ENCODE measurements at regions of chr12 and their contacts with region 1.

Region 1: GRCh38 chr12:57390174-57390573 is 40.7 kb downstream of the R3HDM2 start:
- DNase-seq: no peak
- H3K4me3 ChIP-seq: no peak overlapping the region
- H3K27ac ChIP-seq: no peak overlapping the region
- H3K4me1 ChIP-seq: no peaks in the 10 kb centered on the region
- H3K27me3 ChIP-seq: no peaks in the 10 kb centered on the region
- CTCF ChIP-seq: no peak
- POLR2A ChIP-seq: no peak

Region 2: DNA sequence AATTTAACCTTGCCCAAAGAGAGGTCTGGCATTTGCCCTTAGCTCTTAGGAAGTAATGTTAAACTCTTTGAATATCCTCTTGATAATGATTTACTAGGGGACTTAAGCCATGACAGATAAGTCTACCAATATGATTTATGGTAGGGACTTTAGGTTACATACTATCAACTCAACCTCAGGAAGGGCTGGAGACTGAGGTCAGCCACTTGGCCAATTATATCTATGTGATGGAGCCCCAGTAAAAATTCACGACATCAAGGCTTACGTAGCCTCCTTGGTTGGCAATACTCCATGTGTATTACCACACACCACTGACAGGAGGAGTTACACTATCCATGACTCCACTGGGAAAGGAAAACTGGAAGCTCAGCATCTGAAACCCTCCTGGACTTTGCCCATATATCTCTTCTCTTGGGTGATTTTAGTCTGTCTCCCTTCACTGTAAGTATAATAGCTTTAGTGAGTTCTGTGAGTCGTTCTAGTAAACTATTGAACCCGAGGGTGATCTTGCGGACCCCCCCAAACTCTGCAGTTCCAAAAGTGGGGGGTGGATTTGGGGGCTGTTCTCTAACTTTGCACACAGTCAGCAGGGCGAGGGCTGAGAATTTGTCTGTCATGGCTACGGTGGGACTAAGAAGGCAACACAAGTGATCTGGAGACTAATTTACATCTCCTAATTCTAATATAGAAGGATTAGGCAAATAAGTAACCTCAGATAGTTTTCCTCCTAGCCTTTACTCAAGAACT is 21.7 kb before region 1 on chr12:
- intact Hi-C with region 1: loop called (anchors 2 kb)
- DNase-seq: no peak
- H3K4me3 ChIP-seq: no peak overlapping the region
- H3K27ac ChIP-seq: no peak overlapping the region
- H3K4me1 ChIP-seq: no peaks in the 10 kb centered on the region
- H3K27me3 ChIP-seq: no peaks in the 10 kb centered on the region
- CTCF ChIP-seq: no peak
- POLR2A ChIP-seq: no peak